Activated T-helper 2 cell treated with anti-CD3 and anti-CD28 coated beads, Interferon-gamma antibody, Interleukin-2, Interleukin-4, amounts not matched to agents 10 μg/mL and 5 μg/mL and 100 μg/mL, durations not matched to agents 14 hours and 24 hours and 36 hours (primary cell): ENCODE measurements at regions of chr7 and their contacts with region 1.

Region 1: DNA sequence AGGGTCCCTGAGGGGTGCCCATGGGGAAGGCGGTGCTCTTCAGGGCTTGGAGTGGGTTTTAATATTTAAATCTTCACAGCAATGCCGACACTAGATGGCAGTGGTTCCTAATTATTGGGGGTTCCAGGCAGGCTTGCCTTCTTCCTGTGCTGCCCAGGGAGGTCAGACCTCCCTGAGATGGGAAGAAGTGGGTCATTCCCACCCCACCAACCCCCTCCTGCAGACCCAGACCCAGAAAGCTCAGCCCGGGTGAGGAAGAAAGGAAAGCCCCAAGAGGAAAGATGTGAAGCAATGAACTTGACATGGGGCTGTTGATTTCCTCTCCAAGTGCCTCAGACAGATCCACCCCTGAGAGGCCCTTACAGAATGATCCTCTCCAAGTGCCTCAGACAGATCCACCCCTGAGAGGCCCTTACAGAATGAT is 85.1 kb upstream of the LANCL2 start:
- DNase-seq: peak; percentile 32
- H3K4me3 Mint-ChIP-seq: no peak overlapping the region
- H3K27ac Mint-ChIP-seq: no peak overlapping the region
- H3K4me1 Mint-ChIP-seq: no peaks in the 10 kb centered on the region
- H3K27me3 Mint-ChIP-seq: peaks cover 2% of the 10 kb centered on the region

Region 2: GRCh38 chr7:55415173-55415778 is 135.2 kb after region 1 on chr7:
- intact Hi-C with region 1: loop called (anchors 1 kb)
- DNase-seq: peak; percentile 58
- H3K4me3 Mint-ChIP-seq: no peak overlapping the region
- H3K27ac Mint-ChIP-seq: no peak overlapping the region
- H3K4me1 Mint-ChIP-seq: peaks cover 2% of the 10 kb centered on the region
- H3K27me3 Mint-ChIP-seq: no peaks in the 10 kb centered on the region